ENCODE measurements at regions of chr6 and their contacts with region 1.

Region 1: GRCh38 chr6:35049900-35050756 is 91.0 kb downstream of the TCP11 start:
- DNase-seq: peak; percentile 89
- H3K4me3 ChIP-seq: 0 out of 2 replicates have a peak overlapping the region, but pooled peaks have one; percentile 1
- H3K27ac ChIP-seq: peak overlapping the region; percentile 82
- H3K27me3 ChIP-seq: no peaks in the 10 kb centered on the region
- CTCF ChIP-seq: 0 out of 2 replicates have a peak, but pooled peaks have one; percentile 3

Region 2: GRCh38 chr6:35016502-35017321 is 33.4 kb before region 1 on chr6:
- CTCF ChIA-PET with region 1: interaction called, 3 read pairs
- POLR2A ChIA-PET with region 1: interaction called, 12 read pairs
- DNase-seq: peak; percentile 80
- H3K4me3 ChIP-seq: peak overlapping the region; percentile 49
- H3K27ac ChIP-seq: peak overlapping the region; percentile 81
- H3K27me3 ChIP-seq: no peaks in the 10 kb centered on the region
- CTCF ChIP-seq: no peak

Region 3: GRCh38 chr6:35247642-35248231 is 197.6 kb after region 1 on chr6:
- CTCF ChIA-PET with region 1: no interaction called
- POLR2A ChIA-PET with region 1: no interaction called
- DNase-seq: no peak
- H3K4me3 ChIP-seq: no peak overlapping the region
- H3K27ac ChIP-seq: peak overlapping the region; percentile 21
- H3K27me3 ChIP-seq: no peaks in the 10 kb centered on the region
- CTCF ChIP-seq: no peak